ENCODE measurements at regions of chr10 and their contacts with region 1.

Region 1: GRCh38 chr10:98567391-98568133 is 120.8 kb upstream of the HPS1 start:
- DNase-seq: no peak
- ATAC-seq: no peak
- H3K4me3 ChIP-seq: no peak overlapping the region
- H3K27ac ChIP-seq: no peak overlapping the region
- H3K4me1 ChIP-seq: no peaks in the 10 kb centered on the region
- H3K27me3 ChIP-seq: no peaks in the 10 kb centered on the region
- CTCF ChIP-seq: no peak
- POLR2A ChIP-seq: no peak

Region 2: GRCh38 chr10:98577578-98577977 is 10.0 kb after region 1 on chr10:
- in situ Hi-C with region 1: no loop called
- intact Hi-C with region 1: loop called (anchors 1 kb)
- DNase-seq: no peak
- ATAC-seq: no peak
- H3K4me3 ChIP-seq: no peak overlapping the region
- H3K27ac ChIP-seq: no peak overlapping the region
- H3K4me1 ChIP-seq: no peaks in the 10 kb centered on the region
- H3K27me3 ChIP-seq: no peaks in the 10 kb centered on the region
- CTCF ChIP-seq: no peak
- POLR2A ChIP-seq: no peak

Region 3: GRCh38 chr10:98621630-98622029 is 54.1 kb after region 1 on chr10:
- in situ Hi-C with region 1: loop called in 1 of 4 experiments (anchors 5 kb)
- intact Hi-C with region 1: no loop called
- DNase-seq: no peak
- ATAC-seq: no peak
- H3K4me3 ChIP-seq: no peak overlapping the region
- H3K27ac ChIP-seq: no peak overlapping the region
- H3K4me1 ChIP-seq: no peaks in the 10 kb centered on the region
- H3K27me3 ChIP-seq: no peaks in the 10 kb centered on the region
- CTCF ChIP-seq: no peak
- POLR2A ChIP-seq: no peak

Region 4: DNA sequence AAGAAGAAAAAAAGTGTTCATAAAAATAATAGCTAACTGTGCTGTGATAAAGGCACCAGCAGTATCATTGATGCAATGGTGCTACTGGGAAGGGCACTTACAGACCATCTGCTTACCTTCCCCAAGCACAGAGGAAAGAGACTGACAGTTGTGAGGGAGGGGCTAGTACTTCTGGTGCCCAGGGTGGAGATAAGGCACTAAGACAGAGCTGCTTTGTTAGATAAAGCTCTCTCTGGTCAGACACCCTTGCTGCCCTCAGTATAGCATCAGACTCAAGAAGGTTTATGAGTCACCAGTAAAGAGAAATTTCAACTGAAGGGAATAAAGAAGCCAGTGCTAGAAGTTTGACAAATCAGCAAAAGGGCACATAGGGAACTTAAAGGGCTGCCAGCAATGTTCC is 342.5 kb after region 1 on chr10:
- in situ Hi-C with region 1: no loop called
- intact Hi-C with region 1: no loop called
- DNase-seq: no peak
- ATAC-seq: no peak
- H3K4me3 ChIP-seq: no peak overlapping the region
- H3K27ac ChIP-seq: no peak overlapping the region
- H3K4me1 ChIP-seq: no peaks in the 10 kb centered on the region
- H3K27me3 ChIP-seq: no peaks in the 10 kb centered on the region
- CTCF ChIP-seq: no peak
- POLR2A ChIP-seq: no peak

Measured in gastrocnemius medialis (tissue), 4 donors.